ENCODE measurements at regions of chr7 and their contacts with region 1.

Region 1: DNA sequence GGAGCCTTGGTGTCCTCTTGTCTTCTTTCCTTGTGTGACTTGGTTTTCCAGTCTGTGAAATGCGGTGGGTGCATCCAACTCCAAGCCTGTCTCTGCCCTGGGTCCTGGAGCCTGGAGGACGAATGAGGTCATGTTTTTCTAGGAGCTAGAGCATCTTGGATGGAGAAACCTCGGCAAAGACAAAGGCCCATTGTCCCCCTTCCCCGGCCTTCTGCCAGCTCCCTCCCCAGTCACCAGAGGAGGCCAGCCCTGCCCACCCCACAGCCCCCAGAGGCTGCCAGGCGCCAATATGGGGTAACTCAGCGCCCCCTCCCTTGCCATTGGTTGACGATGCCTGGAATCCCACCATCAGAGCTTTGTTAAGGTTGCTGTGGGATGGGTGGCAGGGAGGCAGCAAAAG is 40.4 kb downstream of the KCTD7 start:
- DNase-seq: no peak
- ATAC-seq: no peak
- H3K4me3 Mint-ChIP-seq: no peak overlapping the region
- H3K27ac Mint-ChIP-seq: peak overlapping the region; percentile 64
- H3K4me1 Mint-ChIP-seq: peaks cover 12% of the 10 kb centered on the region
- H3K27me3 Mint-ChIP-seq: no peaks in the 10 kb centered on the region

Region 2: DNA sequence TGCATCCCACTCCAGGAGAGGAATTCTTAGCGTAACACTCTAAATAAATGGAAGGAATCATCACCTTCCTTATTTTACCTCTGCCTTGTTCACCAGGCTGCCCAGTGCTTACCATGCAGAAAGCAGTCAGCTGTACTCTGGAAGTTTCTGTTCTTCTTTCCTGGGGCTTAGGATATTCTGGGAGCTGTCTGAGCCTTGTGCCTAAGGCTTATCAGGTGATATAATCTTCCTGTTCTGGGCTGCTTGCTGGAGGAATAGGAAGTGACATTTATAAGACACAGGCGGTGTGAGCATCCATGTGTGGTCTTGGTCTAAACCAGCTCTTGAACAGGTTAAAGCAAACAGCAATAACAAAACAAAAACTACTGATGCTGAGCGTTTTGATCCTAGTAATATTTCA is 26.9 kb before region 1 on chr7:
- CTCF ChIA-PET with region 1: interaction called, 5 read pairs
- POLR2A ChIA-PET with region 1: no interaction called
- intact Hi-C with region 1: loop called (anchors 1 to 2 kb)
- DNase-seq: no peak
- ATAC-seq: no peak
- H3K4me3 Mint-ChIP-seq: no peak overlapping the region
- H3K27ac Mint-ChIP-seq: no peak overlapping the region
- H3K4me1 Mint-ChIP-seq: peaks cover 3% of the 10 kb centered on the region
- H3K27me3 Mint-ChIP-seq: no peaks in the 10 kb centered on the region

Measured in activated CD4-positive, alpha-beta T cell treated with anti-CD3 and anti-CD28 coated beads for 36 hours (primary cell).